ENCODE measurements at regions of chr9 and their contacts with region 1.

Region 1: GRCh38 chr9:122350638-122351355 is 20.0 kb upstream of the PTGS1 start:
- DNase-seq: peak in 1 of 2 experiments; percentile 94
- H3K4me3 ChIP-seq: no peak overlapping the region
- H3K27ac ChIP-seq: no peak overlapping the region
- H3K4me1 ChIP-seq: peaks cover 0 to 9% (median 5%) of the 10 kb centered on the region in 4 experiments; a peak in 5 of 7 replicates
- H3K27me3 ChIP-seq: peaks cover 0 to 17% (median 9%) of the 10 kb centered on the region in 4 experiments; a peak in 6 of 7 replicates
- CTCF ChIP-seq: peak; percentile 98
- EP300 ChIP-seq: no peak
- POLR2A ChIP-seq: no peak
- RAD21 ChIP-seq: peak; percentile 100

Region 2: DNA sequence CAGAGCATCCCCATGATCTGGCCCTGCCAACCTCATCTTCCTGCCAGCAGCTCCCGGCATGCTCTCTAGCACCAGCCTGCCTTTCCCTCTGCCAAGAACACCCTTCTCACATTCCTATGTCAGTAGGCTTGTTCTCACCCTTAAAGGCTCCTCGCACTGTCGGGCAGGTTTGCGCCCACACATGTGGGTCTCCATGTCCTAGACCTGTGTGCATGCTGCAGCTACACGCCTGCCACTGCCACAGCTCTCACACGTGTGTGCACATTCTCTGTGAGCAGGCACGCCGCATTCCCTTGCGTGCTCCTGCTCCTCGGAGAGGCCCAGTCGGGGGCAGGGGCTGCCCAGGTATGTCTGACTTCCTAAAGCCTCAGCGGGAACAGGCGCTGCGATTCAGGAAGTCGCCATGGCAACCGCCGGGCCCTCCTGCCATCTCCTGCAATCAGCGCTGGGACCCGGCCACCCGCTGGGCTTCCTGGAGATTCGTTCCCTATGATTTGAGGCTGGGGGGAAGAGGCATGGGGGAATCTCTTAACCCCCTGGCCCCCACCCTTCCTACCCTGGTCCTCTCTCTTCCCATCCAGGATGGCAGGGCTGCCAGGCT is 219.3 kb before region 1 on chr9:
- CTCF ChIA-PET with region 1: interaction called, 544 read pairs
- POLR2A ChIA-PET with region 1: interaction called, 3 read pairs
- DNase-seq: peak in 1 of 2 experiments; percentile 81
- H3K4me3 ChIP-seq: peak overlapping the region in 2 of 4 experiments; percentile 19 to 31; a peak in 4 of 8 replicates
- H3K27ac ChIP-seq: no peak overlapping the region
- H3K4me1 ChIP-seq: peaks cover 14 to 21% (median 17%) of the 10 kb centered on the region in 4 experiments
- H3K27me3 ChIP-seq: peaks cover 0 to 17% (median 14%) of the 10 kb centered on the region in 4 experiments; a peak in 6 of 7 replicates
- CTCF ChIP-seq: no peak
- EP300 ChIP-seq: no peak
- POLR2A ChIP-seq: no peak
- RAD21 ChIP-seq: no peak

Region 3: DNA sequence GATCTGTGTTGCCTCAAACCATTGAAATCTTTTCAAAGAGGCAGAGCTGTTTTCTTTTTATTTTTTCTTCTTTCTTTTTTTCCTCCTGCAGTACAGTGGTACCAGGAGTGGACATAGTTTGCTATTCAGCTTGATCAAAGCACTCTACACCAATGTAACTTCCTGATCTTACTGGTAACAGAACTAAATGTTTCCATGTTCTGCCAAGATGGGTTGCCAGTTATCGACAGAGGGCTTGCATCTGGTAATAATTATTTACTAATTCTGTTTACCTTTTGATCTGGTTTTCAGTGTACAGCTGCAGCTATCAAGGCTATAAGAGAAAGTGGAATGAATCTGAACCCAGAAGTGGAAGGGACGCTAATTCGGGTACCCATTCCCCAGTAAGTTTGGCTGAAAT is 59.3 kb before region 1 on chr9:
- CTCF ChIA-PET with region 1: interaction called, 11 read pairs
- POLR2A ChIA-PET with region 1: no interaction called
- DNase-seq: no peak
- H3K4me3 ChIP-seq: no peak overlapping the region
- H3K27ac ChIP-seq: no peak overlapping the region
- H3K4me1 ChIP-seq: no peaks in the 10 kb centered on the region
- H3K27me3 ChIP-seq: no peaks in the 10 kb centered on the region
- CTCF ChIP-seq: no peak
- EP300 ChIP-seq: no peak
- POLR2A ChIP-seq: no peak
- RAD21 ChIP-seq: no peak

Region 4: GRCh38 chr9:122338994-122339393 is 11.8 kb before region 1 on chr9:
- CTCF ChIA-PET with region 1: interaction called, 56 read pairs
- POLR2A ChIA-PET with region 1: interaction called, 8 read pairs
- DNase-seq: no peak
- H3K4me3 ChIP-seq: no peak overlapping the region
- H3K27ac ChIP-seq: no peak overlapping the region
- H3K4me1 ChIP-seq: peaks cover 18 to 44% (median 28%) of the 10 kb centered on the region in 4 experiments
- H3K27me3 ChIP-seq: 0 out of 7 replicates have a peak, but pooled peaks cover 0 to 2% (median 0%) of the 10 kb centered on the region in 4 experiments
- CTCF ChIP-seq: no peak
- EP300 ChIP-seq: no peak
- POLR2A ChIP-seq: no peak
- RAD21 ChIP-seq: no peak